Aorta (tissue), 5 donors: ENCODE measurements at regions of chr18 and their contacts with region 1.

Region 1: GRCh38 chr18:39149211-39149806 is 1583.7 kb upstream of the CELF4 start:
- DNase-seq: no peak
- ATAC-seq: no peak
- H3K4me3 ChIP-seq: no peak overlapping the region
- H3K27ac ChIP-seq: no peak overlapping the region
- H3K4me1 ChIP-seq: no peaks in the 10 kb centered on the region
- H3K27me3 ChIP-seq: no peaks in the 10 kb centered on the region

Region 2: DNA sequence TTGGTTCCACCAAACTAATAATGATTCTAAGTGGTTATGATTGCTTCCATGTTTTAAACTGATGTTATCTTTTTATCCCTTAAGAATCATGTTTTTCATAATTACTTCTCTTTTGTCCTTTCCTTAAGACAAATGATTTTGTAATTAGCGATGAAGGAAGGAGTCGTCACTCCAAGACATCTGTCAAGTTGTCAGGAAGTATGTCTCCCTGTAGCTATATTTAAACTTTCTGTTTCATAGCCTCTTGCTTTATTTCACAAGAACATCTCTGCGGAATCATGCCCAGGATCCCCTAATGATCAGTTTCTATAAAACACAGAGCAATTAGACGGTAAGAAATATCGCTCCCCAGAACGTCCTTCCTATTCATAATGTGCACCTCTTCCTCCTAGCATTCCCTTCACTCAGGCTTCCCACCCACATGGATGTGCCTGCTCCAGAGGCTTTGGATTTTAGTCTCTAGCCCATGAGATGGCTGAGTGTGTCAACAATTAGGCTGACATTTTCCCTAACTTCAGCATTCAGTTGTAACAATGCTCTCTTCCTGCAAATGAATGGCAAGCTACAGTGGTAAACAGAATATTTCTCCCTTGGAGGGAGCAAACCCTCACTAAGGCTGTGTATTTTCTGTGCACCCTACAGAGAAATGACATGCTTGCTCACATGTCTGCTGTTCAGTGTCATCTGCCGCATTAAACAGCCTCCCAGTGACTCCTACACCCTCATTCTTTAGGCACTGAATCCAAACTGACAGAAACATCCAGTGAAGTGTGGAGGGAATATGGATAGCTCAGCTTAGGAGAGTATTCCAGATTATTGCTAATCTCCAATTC is 704.1 kb before region 1 on chr18:
- intact Hi-C with region 1: no loop called
- DNase-seq: no peak
- ATAC-seq: no peak
- H3K4me3 ChIP-seq: no peak overlapping the region
- H3K27ac ChIP-seq: no peak overlapping the region
- H3K4me1 ChIP-seq: no peaks in the 10 kb centered on the region
- H3K27me3 ChIP-seq: no peaks in the 10 kb centered on the region

Region 3: DNA sequence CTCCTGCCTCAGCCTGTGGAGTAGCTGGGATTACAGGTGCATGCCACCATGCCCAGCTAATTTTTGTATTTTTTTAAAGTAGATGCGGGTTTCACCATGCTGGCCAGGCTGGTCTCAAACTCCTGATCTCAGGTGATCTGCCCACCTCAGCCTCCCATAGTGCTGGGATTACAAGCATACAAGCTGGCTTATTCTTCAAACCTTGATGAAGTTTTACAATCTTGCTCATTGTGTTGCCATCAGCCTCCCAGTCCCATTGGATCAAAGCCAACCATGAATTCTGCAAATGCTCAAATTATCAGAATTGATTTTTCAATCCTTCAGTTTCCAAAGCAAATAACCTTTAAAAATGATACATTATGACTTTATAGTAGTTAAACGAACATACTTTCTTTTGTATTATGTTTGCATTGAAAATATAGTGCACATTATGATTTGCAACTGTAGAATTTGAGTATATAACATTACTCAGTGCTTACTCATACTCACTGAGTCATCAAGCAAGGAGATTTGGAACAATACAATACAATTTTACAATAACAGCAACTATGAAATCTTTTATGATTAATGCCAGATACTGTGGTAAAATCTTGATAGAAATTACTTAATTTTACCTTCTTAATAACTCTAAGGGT is 91.8 kb before region 1 on chr18:
- intact Hi-C with region 1: no loop called
- DNase-seq: no peak
- ATAC-seq: no peak
- H3K4me3 ChIP-seq: no peak overlapping the region
- H3K27ac ChIP-seq: no peak overlapping the region
- H3K4me1 ChIP-seq: peaks cover 0 to 1% of the 10 kb centered on the region in 2 donors
- H3K27me3 ChIP-seq: no peaks in the 10 kb centered on the region

Region 4: DNA sequence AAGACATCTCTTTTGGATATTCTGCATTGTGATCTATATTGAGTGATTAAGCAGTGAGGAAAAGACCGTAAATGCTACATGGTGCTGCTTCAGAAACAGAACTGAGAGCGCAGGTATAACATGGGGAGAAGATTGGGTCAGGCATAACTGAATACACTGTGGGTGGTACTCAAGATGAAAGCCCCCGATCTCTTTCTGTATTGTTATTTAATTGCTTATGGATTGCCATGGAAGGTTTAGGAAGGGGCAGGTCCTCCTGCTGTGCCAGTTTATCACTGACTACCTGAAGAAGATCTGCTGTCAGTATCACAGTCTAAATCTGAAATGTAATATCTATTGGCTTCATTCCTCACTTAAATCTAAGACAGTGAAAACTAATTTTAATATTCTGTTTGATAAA is 15.1 kb before region 1 on chr18:
- intact Hi-C with region 1: loop called in 1 of 2 experiments (anchors 1 kb)
- DNase-seq: no peak
- ATAC-seq: no peak
- H3K4me3 ChIP-seq: no peak overlapping the region
- H3K27ac ChIP-seq: no peak overlapping the region
- H3K4me1 ChIP-seq: no peaks in the 10 kb centered on the region
- H3K27me3 ChIP-seq: no peaks in the 10 kb centered on the region